CD4-positive, alpha-beta T cell (primary cell): ENCODE measurements at regions of chr4 and their contacts with region 1.

Region 1: GRCh38 chr4:90624781-90625180 is 497.6 kb downstream of the CCSER1 start:
- DNase-seq: no peak
- ATAC-seq: no peak
- H3K4me3 ChIP-seq: no peak overlapping the region
- H3K4me3 Mint-ChIP-seq: no peak overlapping the region
- H3K27ac ChIP-seq: no peak overlapping the region
- H3K27ac Mint-ChIP-seq: no peak overlapping the region
- H3K4me1 ChIP-seq: no peaks in the 10 kb centered on the region
- H3K4me1 Mint-ChIP-seq: no peaks in the 10 kb centered on the region
- H3K27me3 ChIP-seq: no peaks in the 10 kb centered on the region
- H3K27me3 Mint-ChIP-seq: no peaks in the 10 kb centered on the region
- CTCF ChIP-seq: no peak

Region 2: GRCh38 chr4:90641861-90642599 is 17.2 kb after region 1 on chr4:
- CTCF ChIA-PET with region 1: no interaction called
- POLR2A ChIA-PET with region 1: no interaction called
- intact Hi-C with region 1: loop called in 1 of 2 experiments (anchors 1 kb)
- DNase-seq: no peak
- ATAC-seq: no peak
- H3K4me3 ChIP-seq: no peak overlapping the region
- H3K4me3 Mint-ChIP-seq: no peak overlapping the region
- H3K27ac ChIP-seq: no peak overlapping the region
- H3K27ac Mint-ChIP-seq: no peak overlapping the region
- H3K4me1 ChIP-seq: no peaks in the 10 kb centered on the region
- H3K4me1 Mint-ChIP-seq: no peaks in the 10 kb centered on the region
- H3K27me3 ChIP-seq: no peaks in the 10 kb centered on the region
- H3K27me3 Mint-ChIP-seq: no peaks in the 10 kb centered on the region
- CTCF ChIP-seq: no peak